ENCODE measurements at regions of chr22 and their contacts with region 1.

Region 1: DNA sequence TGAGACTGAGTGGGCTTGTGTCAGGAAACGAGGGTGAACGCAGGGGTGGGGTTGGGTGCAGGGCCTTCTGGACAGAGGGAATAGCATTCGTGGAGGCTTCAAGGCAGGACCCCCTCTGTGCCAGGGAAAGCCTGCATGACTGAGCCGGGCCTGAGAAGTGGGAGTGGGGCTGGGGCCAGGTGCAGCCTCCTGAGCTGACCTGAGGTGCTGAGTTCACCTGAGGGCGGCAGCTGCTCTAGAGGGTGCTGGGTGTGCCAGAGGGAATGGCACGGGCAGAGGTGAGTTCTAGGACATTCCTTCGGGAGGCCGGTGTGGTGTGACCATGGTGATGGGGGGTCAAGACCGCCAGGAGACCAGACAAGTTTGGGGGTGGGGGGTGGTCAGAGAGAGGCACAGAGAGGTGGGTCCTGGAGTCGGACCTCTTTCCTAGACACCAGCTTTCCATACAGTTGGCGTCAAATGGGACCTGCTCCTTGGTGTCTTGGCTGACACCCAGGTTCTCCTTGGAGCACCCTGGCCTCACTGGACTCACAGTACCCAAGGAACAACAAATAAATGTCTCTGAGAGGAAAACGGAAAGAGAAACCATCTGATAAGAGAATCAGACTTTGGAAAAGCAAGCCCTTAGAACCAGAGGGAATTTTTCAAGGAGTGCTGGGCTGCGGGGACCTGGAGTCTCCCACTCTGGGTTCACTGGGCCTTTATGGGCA is 7.7 kb downstream of the MPPED1 start:
- DNase-seq: no peak
- H3K4me3 ChIP-seq: no peak overlapping the region
- H3K27ac ChIP-seq: no peak overlapping the region
- H3K4me1 ChIP-seq: no peaks in the 10 kb centered on the region
- H3K27me3 ChIP-seq: peaks cover 9% of the 10 kb centered on the region
- CTCF ChIP-seq: no peak

Region 2: DNA sequence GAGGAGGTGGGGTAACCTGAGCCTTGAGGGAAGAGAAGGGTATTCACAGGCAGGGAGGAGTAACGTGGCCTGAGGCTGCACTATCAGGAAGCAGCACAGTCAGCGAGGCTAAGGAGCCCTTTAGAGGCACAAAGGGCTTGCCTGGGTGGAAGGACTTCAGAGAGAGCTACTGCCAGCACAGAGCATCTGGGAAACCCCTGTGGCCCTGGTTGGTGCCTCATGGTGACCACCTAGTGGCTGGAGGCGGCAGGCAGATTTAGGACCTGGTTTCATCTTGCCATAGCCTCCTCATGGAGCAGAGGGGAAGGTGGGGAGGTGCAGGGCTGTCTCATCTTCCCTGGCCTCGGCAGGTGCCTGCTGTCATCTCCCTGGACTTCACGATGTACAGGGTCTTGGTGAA is 56.8 kb after region 1 on chr22:
- CTCF ChIA-PET with region 1: no interaction called
- dilution Hi-C with region 1: loop called (anchors 5 kb)
- in situ Hi-C with region 1: no loop called
- intact Hi-C with region 1: no loop called
- DNase-seq: no peak
- H3K4me3 ChIP-seq: no peak overlapping the region
- H3K27ac ChIP-seq: no peak overlapping the region
- H3K4me1 ChIP-seq: no peaks in the 10 kb centered on the region
- H3K27me3 ChIP-seq: no peaks in the 10 kb centered on the region
- CTCF ChIP-seq: no peak

Region 3: DNA sequence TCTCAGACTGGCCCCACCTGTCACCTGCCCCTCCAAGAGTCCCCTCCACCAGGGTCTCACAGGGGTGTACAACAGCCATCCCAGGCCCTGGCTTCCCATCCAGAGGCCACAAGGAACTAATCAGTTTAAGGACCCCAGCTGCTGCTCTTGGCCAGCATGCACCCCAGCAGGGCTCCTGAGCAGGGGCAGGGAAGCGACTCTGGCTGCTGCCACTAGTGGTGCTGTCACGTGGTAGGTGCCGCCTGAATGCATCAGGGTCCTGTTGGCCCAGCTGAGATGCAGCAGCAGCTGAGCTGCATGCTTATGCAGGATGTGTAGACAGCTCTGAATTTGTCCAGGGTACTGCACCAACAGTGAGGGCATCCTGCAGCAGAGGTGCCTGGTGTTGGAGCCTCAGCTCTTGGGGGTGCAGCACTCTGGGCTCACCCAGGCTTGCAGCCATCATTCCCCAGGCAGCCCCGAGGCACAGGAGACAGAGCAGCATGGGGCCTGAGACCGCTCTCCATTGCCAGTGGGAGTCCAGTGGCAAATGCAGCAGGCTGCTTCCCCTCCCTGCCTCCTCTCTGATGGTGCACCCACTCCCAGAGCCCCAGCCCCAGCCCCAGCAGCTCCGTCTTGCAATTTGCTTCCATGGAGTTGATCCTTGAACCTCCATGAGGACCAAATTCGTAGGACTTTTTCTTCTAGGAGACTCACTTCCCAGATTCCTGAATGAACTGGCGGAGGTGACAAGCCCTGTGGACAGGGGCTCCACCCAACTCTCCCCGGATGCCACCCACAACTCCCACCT is 91.0 kb after region 1 on chr22:
- CTCF ChIA-PET with region 1: interaction called, 11 read pairs
- dilution Hi-C with region 1: no loop called
- in situ Hi-C with region 1: no loop called
- intact Hi-C with region 1: no loop called
- DNase-seq: no peak
- H3K4me3 ChIP-seq: no peak overlapping the region
- H3K27ac ChIP-seq: no peak overlapping the region
- H3K4me1 ChIP-seq: peaks cover 22% of the 10 kb centered on the region
- H3K27me3 ChIP-seq: no peaks in the 10 kb centered on the region
- CTCF ChIP-seq: no peak